CD8-positive, alpha-beta T cell (primary cell): ENCODE measurements at regions of chr1 and their contacts with region 1.

Region 1: DNA sequence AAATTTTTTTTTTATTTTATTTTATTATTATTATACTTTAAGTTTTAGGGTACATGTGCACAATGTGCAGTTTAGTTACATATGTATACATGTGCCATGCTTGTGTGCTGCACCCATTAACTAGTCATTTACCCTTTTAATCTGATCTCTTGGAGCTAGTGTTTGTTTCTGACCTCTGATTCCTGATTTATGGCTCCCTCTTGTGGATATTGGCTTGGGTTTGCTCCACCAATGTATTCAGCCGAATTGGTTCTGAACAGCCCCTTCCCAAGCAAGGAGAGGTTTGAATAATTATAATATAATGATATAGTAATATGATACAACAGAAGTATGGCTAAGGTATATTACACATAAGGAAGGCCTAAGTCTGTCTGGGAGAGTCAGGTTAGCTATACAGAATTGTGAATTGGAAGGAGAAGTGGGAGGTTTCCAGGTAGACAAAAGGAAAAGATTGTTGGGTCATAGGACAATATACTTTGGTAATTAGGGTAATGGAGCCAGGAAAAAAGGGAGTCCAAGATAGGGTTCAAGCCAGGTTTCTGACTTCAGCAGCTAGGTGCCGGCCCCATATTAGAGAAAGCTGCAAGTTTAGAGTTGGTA is 53.1 kb upstream of the HMCN1 start:
- DNase-seq: peak in 4 of 9 experiments; percentile 15 to 67 (median 40)
- ATAC-seq: peak; percentile 51
- H3K4me3 ChIP-seq: no peak overlapping the region
- H3K4me3 Mint-ChIP-seq: no peak overlapping the region
- H3K27ac ChIP-seq: no peak overlapping the region
- H3K27ac Mint-ChIP-seq: no peak overlapping the region
- H3K4me1 ChIP-seq: peaks cover 10% of the 10 kb centered on the region
- H3K4me1 Mint-ChIP-seq: peaks cover 26% of the 10 kb centered on the region
- H3K27me3 ChIP-seq: no peaks in the 10 kb centered on the region
- H3K27me3 Mint-ChIP-seq: no peaks in the 10 kb centered on the region
- CTCF ChIP-seq: peak; percentile 30

Region 2: DNA sequence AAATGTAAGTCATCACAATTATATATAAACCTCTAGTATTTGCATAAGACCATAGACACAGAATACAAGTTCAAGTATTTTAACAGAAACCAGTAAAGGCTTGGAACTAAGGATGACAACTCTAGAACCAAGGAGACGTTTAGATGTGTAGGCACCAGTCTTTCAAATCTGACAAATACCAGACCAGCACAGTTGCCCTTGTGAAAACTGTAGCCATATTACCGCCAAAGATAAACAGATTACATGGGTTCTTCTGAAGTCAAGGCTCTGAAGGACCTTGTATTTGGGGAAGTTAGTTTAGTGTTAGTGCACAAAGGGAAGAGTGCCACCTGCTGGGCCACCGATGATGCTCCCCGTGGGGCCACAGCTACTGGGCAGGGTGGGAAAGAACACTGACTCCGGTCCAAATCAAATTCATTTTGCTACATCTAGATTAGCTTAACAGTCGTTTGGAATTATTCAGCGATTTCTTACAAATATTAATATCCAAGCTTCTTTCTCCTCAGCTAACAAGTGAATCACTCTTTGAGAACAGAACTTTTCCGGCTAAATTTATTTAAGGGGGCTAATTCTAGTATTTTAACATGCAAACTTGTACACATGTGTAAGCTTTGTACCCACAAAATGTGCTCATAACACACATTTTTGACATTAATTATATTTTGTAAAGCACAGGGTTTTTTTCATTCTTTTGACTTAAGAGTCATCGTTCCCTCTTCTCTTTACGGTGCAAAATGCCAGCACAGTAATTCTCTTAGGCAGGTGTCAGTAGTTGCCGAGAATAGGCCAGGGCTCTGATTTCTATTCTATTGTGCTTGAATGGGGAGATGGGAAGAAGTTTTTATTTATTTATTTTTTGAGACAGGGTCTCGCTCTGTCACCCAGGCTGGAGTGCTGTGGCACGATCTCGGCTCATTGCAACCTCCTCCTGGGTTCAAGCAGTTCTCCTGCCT is 698.9 kb before region 1 on chr1:
- CTCF ChIA-PET with region 1: no interaction called
- POLR2A ChIA-PET with region 1: no interaction called
- intact Hi-C with region 1: loop called in 1 of 2 experiments (anchors 10 kb)
- DNase-seq: peak; percentile 57 to 86 (median 78)
- ATAC-seq: peak; percentile 97
- H3K4me3 ChIP-seq: no peak overlapping the region
- H3K4me3 Mint-ChIP-seq: no peak overlapping the region
- H3K27ac ChIP-seq: no peak overlapping the region
- H3K27ac Mint-ChIP-seq: no peak overlapping the region
- H3K4me1 ChIP-seq: no peaks in the 10 kb centered on the region
- H3K4me1 Mint-ChIP-seq: peaks cover 5% of the 10 kb centered on the region
- H3K27me3 ChIP-seq: no peaks in the 10 kb centered on the region
- H3K27me3 Mint-ChIP-seq: peaks cover 20% of the 10 kb centered on the region
- CTCF ChIP-seq: peak; percentile 87

Region 3: DNA sequence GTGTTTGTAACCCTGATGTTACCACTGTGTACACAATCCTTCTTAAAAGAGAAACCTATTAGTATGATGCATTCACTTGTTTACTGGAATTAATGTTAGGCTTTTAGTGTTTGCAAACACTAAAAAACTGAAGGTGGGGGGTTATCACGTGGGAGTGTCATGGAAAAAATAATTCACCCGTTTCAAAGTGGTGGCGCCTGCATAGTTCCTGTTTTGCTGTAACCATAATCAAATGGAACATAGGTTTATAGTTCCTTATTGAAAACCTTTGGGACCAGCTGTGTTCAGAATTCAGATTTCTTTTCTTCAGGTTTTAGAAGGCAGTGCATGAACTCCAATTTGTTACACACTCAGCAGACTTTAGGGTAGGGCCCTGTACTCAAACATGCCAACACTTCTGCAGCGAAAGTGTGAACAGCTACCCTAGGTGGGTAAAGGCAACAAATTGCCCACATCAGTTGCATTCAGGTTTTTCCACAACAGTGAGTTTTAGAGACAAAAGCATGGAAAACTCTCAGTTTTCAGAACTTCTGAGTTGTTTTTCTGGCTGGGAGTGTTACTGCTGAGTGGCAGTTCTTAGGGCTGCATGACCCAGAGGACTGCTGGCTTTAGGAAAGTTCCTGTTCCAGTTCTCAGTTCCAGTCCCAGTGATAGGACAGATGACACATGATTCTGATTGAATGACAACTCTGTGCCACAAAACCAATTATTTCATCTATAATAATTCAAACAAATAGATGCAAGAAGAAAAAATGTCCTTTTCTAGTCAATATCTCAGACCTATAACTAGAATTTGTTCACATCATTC is 335.0 kb before region 1 on chr1:
- CTCF ChIA-PET with region 1: no interaction called
- POLR2A ChIA-PET with region 1: no interaction called
- intact Hi-C with region 1: no loop called
- DNase-seq: no peak
- ATAC-seq: no peak
- H3K4me3 ChIP-seq: no peak overlapping the region
- H3K4me3 Mint-ChIP-seq: no peak overlapping the region
- H3K27ac ChIP-seq: no peak overlapping the region
- H3K27ac Mint-ChIP-seq: no peak overlapping the region
- H3K4me1 ChIP-seq: peaks cover 6% of the 10 kb centered on the region
- H3K4me1 Mint-ChIP-seq: peaks cover 21% of the 10 kb centered on the region
- H3K27me3 ChIP-seq: no peaks in the 10 kb centered on the region
- H3K27me3 Mint-ChIP-seq: no peaks in the 10 kb centered on the region
- CTCF ChIP-seq: no peak

Region 4: DNA sequence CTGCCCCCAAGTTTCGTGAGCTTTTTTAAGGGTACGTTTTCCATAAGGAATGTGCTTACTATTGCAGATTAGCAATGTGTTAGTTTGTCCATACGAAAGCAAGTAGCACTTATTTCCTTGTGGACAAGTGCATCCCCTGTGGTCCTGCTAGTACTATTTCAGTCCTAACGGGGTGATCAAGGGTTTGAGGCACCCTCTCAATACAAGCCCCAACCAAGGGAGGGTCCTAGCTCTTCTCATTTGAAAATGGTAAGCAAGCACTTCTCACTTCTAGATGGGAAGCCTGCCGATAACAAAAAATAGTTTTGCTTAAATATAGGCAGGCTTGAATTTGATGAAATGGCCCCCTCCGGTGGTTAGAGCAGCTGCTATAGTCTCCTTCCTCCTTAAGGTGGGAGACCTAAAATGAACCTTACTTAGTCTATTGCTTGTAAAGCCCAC is 10.9 kb before region 1 on chr1:
- CTCF ChIA-PET with region 1: interaction called, 42 read pairs
- POLR2A ChIA-PET with region 1: no interaction called
- intact Hi-C with region 1: no loop called
- DNase-seq: peak; percentile 12 to 78 (median 63)
- ATAC-seq: peak; percentile 81
- H3K4me3 ChIP-seq: no peak overlapping the region
- H3K4me3 Mint-ChIP-seq: no peak overlapping the region
- H3K27ac ChIP-seq: no peak overlapping the region
- H3K27ac Mint-ChIP-seq: peak overlapping the region; percentile 78
- H3K4me1 ChIP-seq: peaks cover 14% of the 10 kb centered on the region
- H3K4me1 Mint-ChIP-seq: peaks cover 39% of the 10 kb centered on the region
- H3K27me3 ChIP-seq: no peaks in the 10 kb centered on the region
- H3K27me3 Mint-ChIP-seq: no peaks in the 10 kb centered on the region
- CTCF ChIP-seq: peak; percentile 69